ENCODE measurements at regions of chr1 and their contacts with region 1.

Region 1: DNA sequence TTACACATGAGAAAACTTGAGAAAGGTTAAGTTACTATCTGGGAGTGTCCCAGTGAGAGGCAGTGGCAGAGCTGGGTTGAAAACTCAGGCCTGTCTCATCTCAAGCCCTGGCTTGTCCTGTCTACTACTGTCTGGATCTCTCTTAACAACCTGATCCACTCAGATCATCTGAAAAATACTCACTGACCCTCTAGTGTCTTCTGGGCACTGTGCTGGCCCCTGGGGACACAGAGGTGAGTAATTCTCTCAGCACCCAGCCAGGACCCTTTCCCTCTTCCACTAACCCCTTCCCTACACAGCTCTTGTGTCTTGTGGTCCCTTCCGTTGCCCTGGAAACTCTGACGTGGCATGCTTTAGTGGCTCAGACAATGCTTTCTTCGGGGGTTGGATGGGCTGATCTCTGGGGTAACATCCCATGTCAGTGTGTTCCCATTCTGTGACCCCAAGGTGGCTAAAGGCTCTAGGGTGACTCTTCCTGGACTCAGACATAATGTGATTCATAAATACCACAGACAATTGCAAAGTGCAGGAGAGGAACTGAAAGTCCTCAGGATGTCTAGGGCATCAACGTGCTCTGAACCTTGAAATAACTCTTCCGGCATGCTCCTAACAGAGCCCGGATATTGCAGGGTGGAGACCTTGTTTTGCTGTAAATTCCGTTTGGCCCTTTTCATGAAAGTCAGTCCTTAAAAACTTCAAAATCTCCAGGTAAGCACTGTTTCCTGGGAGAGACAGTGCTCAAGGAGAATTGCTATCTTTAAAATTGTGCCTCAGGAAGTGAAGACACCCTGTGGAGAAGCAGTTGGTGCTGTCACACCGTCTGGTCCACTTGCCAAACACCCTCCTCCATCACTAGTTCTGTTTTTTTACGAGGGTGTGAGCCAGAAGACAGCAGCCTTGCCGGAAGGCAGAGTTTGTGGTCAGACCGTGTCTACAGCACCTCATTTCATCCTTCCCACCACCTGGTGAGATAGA is 4.0 kb downstream of the SHISAL2A start:
- DNase-seq: peak; percentile 94
- H3K4me3 Mint-ChIP-seq: peak overlapping the region; percentile 83
- H3K27ac Mint-ChIP-seq: peak overlapping the region; percentile 99
- H3K4me1 Mint-ChIP-seq: peaks cover 60% of the 10 kb centered on the region
- H3K27me3 Mint-ChIP-seq: peaks cover 8% of the 10 kb centered on the region

Region 2: DNA sequence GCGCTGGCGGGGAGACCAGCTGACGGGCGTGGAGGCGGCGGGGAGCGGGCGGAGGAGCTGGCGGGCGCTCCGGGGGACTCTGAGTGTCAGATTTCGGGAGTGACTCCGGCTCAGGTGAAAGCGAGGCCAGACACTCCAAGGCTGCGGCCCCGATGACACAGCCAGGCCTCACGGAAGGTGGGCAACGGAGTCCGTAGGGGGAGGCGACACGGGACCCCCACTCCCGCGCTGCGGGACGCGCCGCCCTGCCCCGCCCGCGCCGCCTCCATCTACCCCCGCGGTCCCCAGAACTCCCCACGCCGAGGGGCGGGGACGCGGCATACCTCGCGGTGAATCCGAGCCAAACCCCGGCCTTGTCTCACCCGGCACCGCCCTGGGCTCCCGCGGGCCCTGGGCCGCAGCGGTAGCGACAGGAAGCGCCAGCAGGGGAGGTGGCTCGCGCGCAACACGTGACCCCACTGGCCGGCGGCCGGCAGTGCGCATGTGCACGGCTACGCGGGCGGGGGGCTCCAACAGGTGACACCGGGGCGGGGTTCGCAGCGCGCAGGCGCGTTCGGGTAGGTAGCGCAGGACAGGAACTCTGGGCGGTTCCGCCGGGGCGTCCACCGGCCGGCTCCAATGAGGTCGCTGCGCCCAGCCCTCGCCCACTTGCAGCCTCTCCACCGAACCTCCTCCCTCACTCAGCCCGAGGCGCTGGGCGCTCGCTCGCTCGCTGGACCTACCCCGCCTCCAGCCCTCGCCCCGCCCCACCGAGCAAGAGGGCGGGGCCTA is 271.1 kb before region 1 on chr1 and contains the start of gene CC2D1B:
- intact Hi-C with region 1: loop called (anchors 5 kb)
- DNase-seq: peak; percentile 100
- H3K4me3 Mint-ChIP-seq: peak within 1 kb of the TSS; percentile 97
- H3K27ac Mint-ChIP-seq: peak within 1 kb of the TSS; percentile 92
- H3K4me1 Mint-ChIP-seq: peaks cover 39% of the 10 kb centered on the region
- H3K27me3 Mint-ChIP-seq: no peaks in the 10 kb centered on the region
- total RNA-seq, gene CC2D1B: 34.8 and 36.7 TPM in 2 replicates

Region 3: GRCh38 chr1:52413410-52413989 is 223.5 kb before region 1 on chr1:
- intact Hi-C with region 1: no loop called
- DNase-seq: no peak
- H3K4me3 Mint-ChIP-seq: no peak overlapping the region
- H3K27ac Mint-ChIP-seq: no peak overlapping the region
- H3K4me1 Mint-ChIP-seq: peaks cover 13% of the 10 kb centered on the region
- H3K27me3 Mint-ChIP-seq: no peaks in the 10 kb centered on the region

Region 4: DNA sequence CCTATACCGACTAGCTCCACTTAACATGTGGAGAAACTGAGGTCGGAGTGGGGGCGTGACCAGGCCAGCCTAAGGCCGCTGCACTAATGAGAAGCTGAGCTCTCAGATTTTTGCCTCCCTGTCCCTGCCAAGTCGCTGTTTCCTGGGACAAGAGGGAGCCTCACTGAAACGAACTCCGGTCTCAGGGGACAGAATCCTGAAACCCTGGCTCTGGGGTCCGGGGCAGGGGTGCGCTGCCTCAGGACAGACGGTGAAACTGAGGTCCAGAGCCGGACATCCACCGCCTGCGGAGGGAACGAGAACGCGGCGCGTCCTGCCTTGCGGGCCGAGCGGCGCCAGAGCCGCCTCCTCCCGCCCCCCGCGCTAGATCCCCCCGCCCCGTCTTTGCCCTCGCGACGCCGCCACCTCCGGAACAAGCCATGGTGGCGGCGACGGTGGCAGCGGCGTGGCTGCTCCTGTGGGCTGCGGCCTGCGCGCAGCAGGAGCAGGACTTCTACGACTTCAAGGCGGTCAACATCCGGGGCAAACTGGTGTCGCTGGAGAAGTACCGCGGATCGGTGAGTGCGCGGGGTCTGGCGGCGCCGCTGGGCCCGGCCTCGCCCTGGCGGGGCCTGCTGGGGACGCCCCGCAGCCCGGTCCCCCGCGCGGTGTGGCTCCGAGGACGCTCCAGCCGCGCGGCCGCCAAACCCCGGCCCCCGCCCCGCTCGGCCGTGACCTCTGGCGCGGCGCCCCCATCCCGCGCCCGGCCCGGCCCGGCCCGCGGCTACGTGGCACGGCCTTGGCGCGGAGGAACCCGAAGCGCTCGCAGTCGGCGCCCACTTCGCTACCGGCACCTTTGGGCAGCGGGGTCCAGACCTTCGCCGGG is 34.8 kb before region 1 on chr1 and contains the start of gene GPX7:
- intact Hi-C with region 1: loop called (anchors 2 kb)
- DNase-seq: peak; percentile 91
- H3K4me3 Mint-ChIP-seq: peak within 1 kb of the TSS; percentile 84
- H3K27ac Mint-ChIP-seq: peak within 1 kb of the TSS; percentile 87
- H3K4me1 Mint-ChIP-seq: peaks cover 37% of the 10 kb centered on the region
- H3K27me3 Mint-ChIP-seq: no peaks in the 10 kb centered on the region
- total RNA-seq, gene GPX7: 28.0 and 29.4 TPM in 2 replicates

Region 5: DNA sequence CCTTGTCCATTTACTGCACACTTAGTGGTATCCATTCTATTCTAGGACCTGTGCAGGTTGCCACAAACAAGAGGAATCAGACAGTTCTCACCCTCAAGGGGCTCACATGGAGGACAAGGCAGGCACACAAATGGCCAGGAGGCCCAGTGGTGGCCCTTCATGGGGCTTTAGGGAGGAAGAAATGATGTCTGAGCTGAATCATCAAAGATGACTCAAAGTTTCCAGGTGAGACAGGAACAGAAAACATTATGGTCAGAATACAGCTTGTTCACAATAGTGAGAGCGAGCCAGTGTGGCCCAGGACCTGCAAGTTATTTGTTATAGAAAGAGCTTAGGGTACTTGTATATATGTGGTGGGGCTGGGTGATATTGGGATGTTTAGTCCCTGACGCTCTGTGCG is 22.3 kb after region 1 on chr1:
- intact Hi-C with region 1: loop called (anchors 1 kb)
- DNase-seq: peak; percentile 74
- H3K4me3 Mint-ChIP-seq: no peak overlapping the region
- H3K27ac Mint-ChIP-seq: peak overlapping the region; percentile 88
- H3K4me1 Mint-ChIP-seq: peaks cover 21% of the 10 kb centered on the region
- H3K27me3 Mint-ChIP-seq: no peaks in the 10 kb centered on the region

Region 6: GRCh38 chr1:52669696-52670095 is 32.7 kb after region 1 on chr1:
- intact Hi-C with region 1: no loop called
- DNase-seq: no peak
- H3K4me3 Mint-ChIP-seq: no peak overlapping the region
- H3K27ac Mint-ChIP-seq: no peak overlapping the region
- H3K4me1 Mint-ChIP-seq: peaks cover 8% of the 10 kb centered on the region
- H3K27me3 Mint-ChIP-seq: no peaks in the 10 kb centered on the region

Region 7: GRCh38 chr1:52683367-52683940 is 46.4 kb after region 1 on chr1:
- intact Hi-C with region 1: loop called (anchors 1 kb)
- DNase-seq: peak; percentile 64
- H3K4me3 Mint-ChIP-seq: no peak overlapping the region
- H3K27ac Mint-ChIP-seq: no peak overlapping the region
- H3K4me1 Mint-ChIP-seq: peaks cover 8% of the 10 kb centered on the region
- H3K27me3 Mint-ChIP-seq: no peaks in the 10 kb centered on the region

Measured in activated CD4-positive, alpha-beta T cell treated with anti-CD3 and anti-CD28 coated beads, Interleukin-2, amount 10 ng/mL, durations not matched to agents 24 days and 14 days (primary cell).